ENCODE measurements at regions of chrX and their contacts with region 1.

Region 1: DNA sequence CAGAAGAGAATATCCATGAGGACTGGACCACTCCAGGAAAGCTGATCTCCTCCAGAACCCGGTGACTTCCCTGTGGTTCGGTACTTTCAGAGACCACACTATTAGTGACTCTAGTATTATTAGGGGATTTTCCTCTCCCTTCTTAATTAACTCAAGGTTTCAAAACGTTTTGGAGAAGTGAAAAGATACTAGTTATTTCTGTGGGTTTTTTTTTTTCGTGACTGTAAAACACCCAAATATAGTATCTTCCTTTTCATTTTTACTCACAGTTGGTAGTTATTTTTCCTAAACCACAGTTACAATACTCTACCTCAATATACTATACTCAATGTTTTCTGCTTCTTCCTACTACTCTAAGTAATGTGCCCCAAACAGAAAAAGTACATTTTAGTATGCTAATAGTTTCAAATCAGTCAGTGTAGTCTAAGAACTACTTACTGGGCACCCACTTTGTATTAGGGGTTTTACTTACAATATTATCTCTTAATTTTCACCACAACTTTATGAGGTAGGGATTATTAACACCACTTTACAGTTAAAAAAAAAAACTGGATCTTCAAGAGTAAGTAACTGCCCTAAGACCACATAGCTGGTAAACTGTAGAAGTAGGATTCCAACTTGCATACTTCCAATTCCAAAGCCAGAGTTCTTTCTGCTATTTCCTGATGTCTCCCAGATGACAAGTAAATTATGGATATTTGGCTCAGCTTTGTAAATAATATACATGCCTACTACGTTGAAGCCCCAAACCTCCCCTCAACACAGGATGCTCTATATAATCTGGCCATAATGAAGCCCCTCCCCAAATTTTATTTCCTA is 45.0 kb downstream of the SLC9A7 start:
- DNase-seq: no peak
- H3K4me3 Mint-ChIP-seq: no peak overlapping the region
- H3K27ac Mint-ChIP-seq: peak overlapping the region; percentile 33
- H3K4me1 Mint-ChIP-seq: peaks cover 65% of the 10 kb centered on the region
- H3K27me3 Mint-ChIP-seq: no peaks in the 10 kb centered on the region

Region 2: GRCh38 chrX:46637937-46638336 is 75.9 kb before region 1 on chrX:
- CTCF ChIA-PET with region 1: no interaction called
- POLR2A ChIA-PET with region 1: no interaction called
- intact Hi-C with region 1: no loop called
- DNase-seq: peak; percentile 20
- H3K4me3 Mint-ChIP-seq: no peak overlapping the region
- H3K27ac Mint-ChIP-seq: no peak overlapping the region
- H3K4me1 Mint-ChIP-seq: peaks cover 39% of the 10 kb centered on the region
- H3K27me3 Mint-ChIP-seq: no peaks in the 10 kb centered on the region

Region 3: DNA sequence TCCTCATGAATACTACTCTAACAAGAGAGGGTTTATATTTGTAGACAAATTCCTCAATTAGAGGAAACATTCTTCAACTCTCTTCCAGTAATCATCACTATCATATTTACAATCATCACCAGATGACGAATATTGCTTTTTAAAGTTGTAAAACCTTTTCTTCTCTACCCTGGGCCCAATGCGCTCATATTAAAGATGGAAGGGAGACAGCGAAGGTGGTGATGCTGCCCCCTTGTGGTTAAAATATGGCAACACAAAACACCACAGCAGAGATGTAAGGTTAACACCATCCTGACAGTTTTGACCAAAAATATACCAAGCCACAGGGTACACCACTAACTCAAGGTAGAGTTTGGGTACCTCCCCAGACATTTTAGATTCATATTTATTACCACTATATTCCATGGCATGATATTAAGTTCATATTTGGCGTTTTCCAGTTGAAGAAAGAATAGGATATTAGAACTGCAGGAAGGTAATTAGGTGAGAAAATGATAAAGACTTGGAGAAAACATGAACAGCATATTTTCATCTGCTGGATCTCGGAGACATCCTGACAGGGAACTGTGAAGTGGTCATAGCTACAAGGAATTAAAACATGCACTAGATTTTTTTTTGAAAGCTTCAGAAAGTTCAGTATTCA is 27.8 kb before region 1 on chrX:
- CTCF ChIA-PET with region 1: no interaction called
- POLR2A ChIA-PET with region 1: no interaction called
- intact Hi-C with region 1: no loop called
- DNase-seq: peak; percentile 52
- H3K4me3 Mint-ChIP-seq: no peak overlapping the region
- H3K27ac Mint-ChIP-seq: no peak overlapping the region
- H3K4me1 Mint-ChIP-seq: peaks cover 14% of the 10 kb centered on the region
- H3K27me3 Mint-ChIP-seq: no peaks in the 10 kb centered on the region

Region 4: DNA sequence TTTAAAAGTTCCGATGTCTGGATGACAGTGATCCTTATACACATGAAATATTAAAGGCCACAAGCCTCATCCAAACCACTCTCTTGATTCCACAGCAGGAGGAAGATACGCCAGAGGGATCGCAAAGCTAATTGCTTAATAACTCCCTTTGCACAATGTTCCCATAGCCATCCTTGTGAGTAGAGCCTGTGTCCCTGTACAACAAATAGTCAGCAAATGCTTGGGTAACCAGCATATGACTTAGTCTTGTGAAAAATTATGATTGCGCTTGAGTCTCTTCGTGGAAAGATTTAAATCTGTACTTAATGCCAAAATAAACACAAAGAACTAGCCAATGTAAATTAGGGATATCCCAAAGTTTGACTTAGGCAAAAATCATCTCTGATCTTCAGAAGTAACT is 13.6 kb after region 1 on chrX:
- CTCF ChIA-PET with region 1: no interaction called
- POLR2A ChIA-PET with region 1: no interaction called
- intact Hi-C with region 1: no loop called
- DNase-seq: no peak
- H3K4me3 Mint-ChIP-seq: no peak overlapping the region
- H3K27ac Mint-ChIP-seq: no peak overlapping the region
- H3K4me1 Mint-ChIP-seq: peaks cover 17% of the 10 kb centered on the region
- H3K27me3 Mint-ChIP-seq: no peaks in the 10 kb centered on the region

Region 5: GRCh38 chrX:46796574-46797191 is 82.8 kb after region 1 on chrX:
- CTCF ChIA-PET with region 1: no interaction called
- POLR2A ChIA-PET with region 1: no interaction called
- intact Hi-C with region 1: loop called (anchors 10 kb)
- DNase-seq: peak; percentile 84
- H3K4me3 Mint-ChIP-seq: no peak overlapping the region
- H3K27ac Mint-ChIP-seq: no peak overlapping the region
- H3K4me1 Mint-ChIP-seq: peaks cover 19% of the 10 kb centered on the region
- H3K27me3 Mint-ChIP-seq: no peaks in the 10 kb centered on the region